B cell (primary cell): ENCODE measurements at regions of chr1 and their contacts with region 1.

Region 1: GRCh38 chr1:32335790-32336590 is at the start of gene MARCKSL1:
- DNase-seq: peak; percentile 94
- ATAC-seq: peak; percentile 61
- H3K4me3 ChIP-seq: peak within 1 kb of the TSS; percentile 5 to 78 (median 70)
- H3K4me3 Mint-ChIP-seq: peak within 1 kb of the TSS; percentile 93
- H3K27ac ChIP-seq: peak within 1 kb of the TSS; percentile 49 to 61
- H3K27ac Mint-ChIP-seq: peak within 1 kb of the TSS; percentile 92
- H3K4me1 ChIP-seq: peaks cover 57 to 61% of the 10 kb centered on the region in 2 donors
- H3K4me1 Mint-ChIP-seq: peaks cover 60% of the 10 kb centered on the region
- H3K27me3 ChIP-seq: no peaks in the 10 kb centered on the region
- H3K27me3 Mint-ChIP-seq: no peaks in the 10 kb centered on the region
- CTCF ChIP-seq: no peak
- total RNA-seq, gene MARCKSL1: 73.2 and 77.6 TPM in 2 replicates

Region 2: DNA sequence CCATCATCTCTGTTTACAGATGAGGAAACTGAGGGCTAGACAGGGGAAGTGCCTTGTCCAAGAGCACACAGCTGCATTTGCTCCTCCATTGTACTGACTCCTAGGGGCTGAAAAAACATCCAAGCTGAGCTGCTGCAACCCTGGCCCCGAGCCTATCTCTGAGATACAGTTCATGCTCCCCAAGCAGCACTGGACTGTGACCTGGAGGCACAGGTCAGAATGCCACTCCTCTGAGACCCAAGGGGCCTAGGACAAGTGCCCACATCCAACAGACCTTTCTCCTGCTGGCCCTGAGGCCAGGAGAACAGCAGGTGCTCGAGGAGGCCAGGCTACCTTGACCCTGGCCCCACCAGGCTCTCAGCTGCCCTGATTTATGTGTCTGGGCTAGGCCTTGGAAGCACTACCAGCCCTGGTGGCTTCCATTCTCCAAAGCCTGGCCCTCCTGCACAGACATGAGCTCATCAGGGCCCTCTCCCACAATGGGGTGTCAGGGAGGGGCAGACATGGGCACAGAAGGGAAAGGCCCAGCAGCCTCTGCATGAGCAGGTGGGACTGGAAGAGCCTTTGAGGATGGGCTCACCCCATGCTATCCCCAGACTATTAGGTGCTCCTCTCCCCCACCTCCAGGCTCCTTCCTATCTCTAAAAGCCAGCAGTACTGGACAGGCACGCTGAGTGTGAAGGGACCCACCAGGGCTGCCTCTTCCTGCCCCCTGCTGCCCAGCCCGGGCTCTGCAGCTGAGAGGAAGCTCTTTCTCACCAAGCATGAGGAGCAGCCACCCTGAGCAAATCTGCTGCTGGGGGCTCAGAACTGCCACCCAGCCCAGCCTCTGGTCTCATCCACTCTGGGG is 590.7 kb before region 1 on chr1:
- CTCF ChIA-PET with region 1: no interaction called
- POLR2A ChIA-PET with region 1: no interaction called
- intact Hi-C with region 1: no loop called
- DNase-seq: peak; percentile 39
- ATAC-seq: peak; percentile 34
- H3K4me3 ChIP-seq: no peak overlapping the region
- H3K4me3 Mint-ChIP-seq: no peak overlapping the region
- H3K27ac ChIP-seq: peak overlapping the region; percentile 28 to 29
- H3K27ac Mint-ChIP-seq: peak overlapping the region; percentile 87
- H3K4me1 ChIP-seq: peaks cover 23 to 36% of the 10 kb centered on the region in 2 donors
- H3K4me1 Mint-ChIP-seq: peaks cover 45% of the 10 kb centered on the region
- H3K27me3 ChIP-seq: peaks cover 0 to 8% (median 2%) of the 10 kb centered on the region in 4 experiments
- H3K27me3 Mint-ChIP-seq: peaks cover 3% of the 10 kb centered on the region
- CTCF ChIP-seq: peak; percentile 44

Region 3: DNA sequence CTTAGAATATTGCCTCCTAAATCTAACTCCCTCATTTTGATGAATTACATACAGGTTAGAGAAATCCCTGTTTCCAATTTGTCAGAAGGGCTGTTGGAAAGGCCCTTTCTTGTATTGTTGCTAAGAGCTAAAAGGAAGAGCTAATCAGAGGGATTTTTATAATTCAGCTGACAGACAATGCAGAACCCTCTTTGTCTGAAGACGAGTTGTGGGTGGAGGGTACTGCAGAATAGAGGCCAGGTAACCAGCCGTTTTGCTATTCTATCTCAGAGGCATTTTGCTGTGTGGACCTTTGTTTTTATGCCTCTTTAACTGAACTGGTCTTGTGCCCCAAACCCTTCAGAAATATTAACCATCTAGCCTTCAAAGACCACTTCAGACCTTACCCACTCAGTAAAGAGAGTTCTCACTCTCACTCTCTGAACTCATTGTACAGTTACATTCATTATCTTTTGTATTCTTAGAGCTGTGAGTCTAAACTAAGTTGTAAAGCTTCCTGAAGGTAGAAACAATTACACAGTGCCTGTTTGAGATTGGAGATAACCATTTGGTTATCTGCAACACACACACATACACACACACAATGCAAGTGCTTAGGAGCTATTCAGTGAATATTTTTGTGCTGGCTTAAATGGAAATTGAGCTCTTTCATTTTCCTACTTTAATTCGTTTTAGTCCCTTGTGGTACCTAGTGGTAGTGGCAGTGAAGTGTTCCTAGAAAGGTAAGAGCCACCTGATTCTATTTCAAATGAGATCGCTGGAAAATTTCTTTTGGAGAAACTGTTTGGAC is 208.4 kb before region 1 on chr1:
- CTCF ChIA-PET with region 1: no interaction called
- POLR2A ChIA-PET with region 1: interaction called, 11 read pairs
- intact Hi-C with region 1: no loop called
- DNase-seq: no peak
- ATAC-seq: no peak
- H3K4me3 ChIP-seq: no peak overlapping the region
- H3K4me3 Mint-ChIP-seq: peak overlapping the region; percentile 7
- H3K27ac ChIP-seq: peak overlapping the region in 1 of 2 donors; percentile 17
- H3K27ac Mint-ChIP-seq: peak overlapping the region; percentile 29
- H3K4me1 ChIP-seq: peaks cover 18 to 31% of the 10 kb centered on the region in 2 donors
- H3K4me1 Mint-ChIP-seq: peaks cover 43% of the 10 kb centered on the region
- H3K27me3 ChIP-seq: no peaks in the 10 kb centered on the region
- H3K27me3 Mint-ChIP-seq: no peaks in the 10 kb centered on the region
- CTCF ChIP-seq: no peak

Region 4: DNA sequence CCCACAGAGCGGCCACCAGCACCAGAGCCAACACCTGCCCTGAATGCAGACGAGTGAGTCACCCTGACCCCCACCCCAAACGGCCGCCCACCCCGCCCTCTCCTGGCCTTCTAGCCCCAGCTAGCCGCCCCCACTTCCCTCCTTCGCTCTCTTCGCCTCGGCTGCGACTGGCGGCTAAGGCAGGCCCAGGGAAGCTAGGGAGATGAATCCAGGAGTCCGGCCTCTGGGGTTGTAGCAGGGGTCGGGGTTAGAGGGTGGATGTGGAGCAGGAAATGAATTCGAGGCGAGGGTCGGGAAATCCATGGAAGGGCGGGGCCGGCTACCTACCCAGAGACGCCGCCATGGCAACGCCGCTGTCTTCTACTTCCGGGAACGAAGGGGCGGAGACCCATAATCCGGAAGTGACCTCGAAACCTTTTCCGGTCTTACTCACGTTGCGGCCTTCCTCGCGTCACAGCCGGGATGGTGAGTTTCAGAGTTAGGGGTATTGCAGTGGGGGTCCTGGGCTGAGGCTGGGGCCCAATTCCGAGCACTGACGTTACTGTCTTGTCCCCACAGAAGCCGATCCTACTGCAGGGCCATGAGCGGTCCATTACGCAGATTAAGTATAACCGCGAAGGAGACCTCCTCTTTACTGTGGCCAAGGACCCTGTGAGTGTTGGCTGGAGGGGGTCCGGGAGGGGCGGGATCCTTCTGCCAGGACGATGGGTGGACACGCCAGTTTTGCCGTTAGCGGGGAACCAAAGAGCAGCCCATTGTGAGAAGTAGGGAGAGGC is 113.8 kb before region 1 on chr1 and contains the starts of genes EIF3I and TMEM234:
- CTCF ChIA-PET with region 1: interaction called, 33 read pairs
- POLR2A ChIA-PET with region 1: interaction called, 4 read pairs
- intact Hi-C with region 1: loop called (anchors 1 kb)
- DNase-seq: peak; percentile 94
- ATAC-seq: peak; percentile 86
- H3K4me3 ChIP-seq: peak within 1 kb of the TSS; percentile 61 to 99 (median 93)
- H3K4me3 Mint-ChIP-seq: peak within 1 kb of the TSS; percentile 97
- H3K27ac ChIP-seq: peak within 1 kb of the TSS; percentile 72 to 94
- H3K27ac Mint-ChIP-seq: peak within 1 kb of the TSS; percentile 98
- H3K4me1 ChIP-seq: peaks cover 28 to 30% of the 10 kb centered on the region in 2 donors
- H3K4me1 Mint-ChIP-seq: peaks cover 43% of the 10 kb centered on the region
- H3K27me3 ChIP-seq: no peaks in the 10 kb centered on the region
- H3K27me3 Mint-ChIP-seq: no peaks in the 10 kb centered on the region
- CTCF ChIP-seq: no peak
- total RNA-seq, gene EIF3I: 87.0 and 91.0 TPM in 2 replicates
- total RNA-seq, gene TMEM234: 50.4 and 60.8 TPM in 2 replicates

Region 5: GRCh38 chr1:32247983-32248889 is 87.8 kb before region 1 on chr1:
- CTCF ChIA-PET with region 1: interaction called, 71 read pairs
- POLR2A ChIA-PET with region 1: interaction called, 19 read pairs
- intact Hi-C with region 1: loop called (anchors 1 kb)
- DNase-seq: peak; percentile 77
- ATAC-seq: peak; percentile 11
- H3K4me3 ChIP-seq: peak overlapping the region in 3 of 5 experiments; percentile 7 to 56 (median 29)
- H3K4me3 Mint-ChIP-seq: peak overlapping the region; percentile 68
- H3K27ac ChIP-seq: peak overlapping the region; percentile 94 to 95
- H3K27ac Mint-ChIP-seq: peak overlapping the region; percentile 84
- H3K4me1 ChIP-seq: peaks cover 72 to 73% of the 10 kb centered on the region in 2 donors
- H3K4me1 Mint-ChIP-seq: peaks cover 64% of the 10 kb centered on the region
- H3K27me3 ChIP-seq: no peaks in the 10 kb centered on the region
- H3K27me3 Mint-ChIP-seq: no peaks in the 10 kb centered on the region
- CTCF ChIP-seq: peak; percentile 90

Region 6: GRCh38 chr1:32351399-32352238 is 15.6 kb after region 1 on chr1:
- CTCF ChIA-PET with region 1: interaction called, 29 read pairs
- POLR2A ChIA-PET with region 1: interaction called, 51 read pairs
- intact Hi-C with region 1: loop called (anchors 1 kb)
- DNase-seq: peak; percentile 95
- ATAC-seq: peak; percentile 96
- H3K4me3 ChIP-seq: peak overlapping the region; percentile 40 to 75 (median 63)
- H3K4me3 Mint-ChIP-seq: peak overlapping the region; percentile 88
- H3K27ac ChIP-seq: peak overlapping the region; percentile 54 to 91
- H3K27ac Mint-ChIP-seq: peak overlapping the region; percentile 88
- H3K4me1 ChIP-seq: peaks cover 14 to 27% of the 10 kb centered on the region in 2 donors
- H3K4me1 Mint-ChIP-seq: peaks cover 22% of the 10 kb centered on the region
- H3K27me3 ChIP-seq: no peaks in the 10 kb centered on the region
- H3K27me3 Mint-ChIP-seq: no peaks in the 10 kb centered on the region
- CTCF ChIP-seq: no peak

Region 7: GRCh38 chr1:32372149-32372756 is 36.3 kb after region 1 on chr1:
- CTCF ChIA-PET with region 1: interaction called, 14 read pairs
- POLR2A ChIA-PET with region 1: interaction called, 15 read pairs
- intact Hi-C with region 1: loop called (anchors 5 kb)
- DNase-seq: peak; percentile 66
- ATAC-seq: peak; percentile 75
- H3K4me3 ChIP-seq: no peak overlapping the region
- H3K4me3 Mint-ChIP-seq: no peak overlapping the region
- H3K27ac ChIP-seq: no peak overlapping the region
- H3K27ac Mint-ChIP-seq: no peak overlapping the region
- H3K4me1 ChIP-seq: peaks cover 10 to 13% of the 10 kb centered on the region in 2 donors
- H3K4me1 Mint-ChIP-seq: peaks cover 12% of the 10 kb centered on the region
- H3K27me3 ChIP-seq: no peaks in the 10 kb centered on the region
- H3K27me3 Mint-ChIP-seq: no peaks in the 10 kb centered on the region
- CTCF ChIP-seq: no peak

Region 8: DNA sequence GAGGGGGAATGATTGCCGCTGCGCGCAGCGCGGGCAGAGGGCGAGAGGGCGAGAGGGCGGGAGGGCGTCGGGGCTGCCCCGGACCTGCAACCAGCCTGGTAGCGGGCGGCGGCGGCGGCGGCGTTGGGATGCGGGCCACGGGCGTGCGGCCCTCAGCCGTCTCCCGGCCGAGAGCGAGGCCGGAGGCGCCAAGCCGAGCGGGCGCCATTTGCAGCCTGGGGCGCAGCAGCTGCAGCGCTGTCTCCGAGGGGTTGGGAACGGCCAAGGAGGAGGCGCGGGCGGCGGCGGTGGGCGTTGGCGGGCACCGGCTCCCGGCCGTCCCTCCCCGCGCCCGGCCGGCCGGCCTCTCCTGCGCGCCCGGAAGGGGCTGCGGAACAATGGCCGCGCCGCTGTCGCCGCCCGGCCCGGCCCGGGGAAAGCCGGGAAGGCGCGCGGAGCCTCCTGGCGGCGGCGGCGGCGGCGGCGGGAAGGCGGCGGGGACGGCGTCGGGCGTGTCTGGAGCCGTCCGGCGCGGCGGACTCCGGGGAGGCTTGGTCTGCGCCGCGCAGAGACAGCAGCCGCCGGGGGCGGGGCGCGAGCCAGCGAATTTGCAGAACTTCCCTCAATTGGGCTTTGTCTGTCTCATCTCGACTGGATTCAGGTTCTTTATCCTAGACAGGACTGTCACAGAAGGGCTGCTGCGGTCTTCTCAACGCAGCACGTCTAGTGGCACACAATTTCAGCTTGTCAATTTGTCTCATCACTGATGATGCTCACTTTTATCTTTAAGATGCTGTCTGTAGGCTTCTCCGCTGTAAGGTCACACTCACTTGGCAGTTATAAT is 164.6 kb after region 1 on chr1:
- CTCF ChIA-PET with region 1: no interaction called
- POLR2A ChIA-PET with region 1: no interaction called
- intact Hi-C with region 1: no loop called
- DNase-seq: peak; percentile 59
- ATAC-seq: peak; percentile 76
- H3K4me3 ChIP-seq: peak overlapping the region in 4 of 5 experiments; percentile 28 to 58 (median 44)
- H3K4me3 Mint-ChIP-seq: peak overlapping the region; percentile 88
- H3K27ac ChIP-seq: no peak overlapping the region
- H3K27ac Mint-ChIP-seq: peak overlapping the region; percentile 6
- H3K4me1 ChIP-seq: peaks cover 2 to 8% of the 10 kb centered on the region in 2 donors
- H3K4me1 Mint-ChIP-seq: peaks cover 5% of the 10 kb centered on the region
- H3K27me3 ChIP-seq: peaks cover 0 to 36% (median 11%) of the 10 kb centered on the region in 4 experiments
- H3K27me3 Mint-ChIP-seq: peaks cover 45% of the 10 kb centered on the region
- CTCF ChIP-seq: no peak

Region 9: GRCh38 chr1:32733582-32734321 is 397.8 kb after region 1 on chr1:
- CTCF ChIA-PET with region 1: no interaction called
- POLR2A ChIA-PET with region 1: no interaction called
- intact Hi-C with region 1: no loop called
- DNase-seq: no peak
- ATAC-seq: no peak
- H3K4me3 ChIP-seq: no peak overlapping the region
- H3K4me3 Mint-ChIP-seq: no peak overlapping the region
- H3K27ac ChIP-seq: no peak overlapping the region
- H3K27ac Mint-ChIP-seq: no peak overlapping the region
- H3K4me1 ChIP-seq: no peaks in the 10 kb centered on the region
- H3K4me1 Mint-ChIP-seq: no peaks in the 10 kb centered on the region
- H3K27me3 ChIP-seq: peaks cover 0 to 6% (median 0%) of the 10 kb centered on the region in 4 experiments
- H3K27me3 Mint-ChIP-seq: peaks cover 17% of the 10 kb centered on the region
- CTCF ChIP-seq: no peak